ENCODE measurements at regions of chr1 and their contacts with region 1.

Region 1: GRCh38 chr1:229661022-229661877 is 35.2 kb downstream of the URB2 start:
- DNase-seq: peak; percentile 92
- H3K4me3 ChIP-seq: no peak overlapping the region
- H3K27ac ChIP-seq: no peak overlapping the region
- H3K4me1 ChIP-seq: peaks cover 9% of the 10 kb centered on the region
- H3K27me3 ChIP-seq: no peaks in the 10 kb centered on the region
- CTCF ChIP-seq: peak; percentile 81 to 87 (median 86)
- POLR2A ChIP-seq: no peak

Region 2: DNA sequence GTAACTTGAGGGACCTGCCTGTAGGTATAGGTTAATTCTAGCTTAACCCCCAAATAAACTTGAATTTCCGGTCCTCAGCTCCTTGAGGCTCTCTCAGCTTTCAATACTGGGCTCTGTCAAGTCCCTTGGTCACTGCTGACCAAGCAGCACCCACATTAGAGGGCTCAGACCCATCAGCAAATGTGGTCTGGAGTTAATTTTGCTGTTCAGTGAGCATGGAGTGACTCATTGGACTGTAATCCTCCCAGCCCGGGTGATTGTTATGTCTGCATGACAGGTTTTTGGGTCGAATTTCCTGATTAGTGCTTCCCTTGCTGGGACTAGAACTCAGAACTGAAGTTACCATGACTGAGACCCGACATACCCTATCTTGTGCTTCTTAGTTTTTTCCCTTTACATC is 95.4 kb after region 1 on chr1:
- intact Hi-C with region 1: no loop called
- DNase-seq: no peak
- H3K4me3 ChIP-seq: no peak overlapping the region
- H3K27ac ChIP-seq: no peak overlapping the region
- H3K4me1 ChIP-seq: no peaks in the 10 kb centered on the region
- H3K27me3 ChIP-seq: no peaks in the 10 kb centered on the region
- CTCF ChIP-seq: no peak
- POLR2A ChIP-seq: no peak

Region 3: DNA sequence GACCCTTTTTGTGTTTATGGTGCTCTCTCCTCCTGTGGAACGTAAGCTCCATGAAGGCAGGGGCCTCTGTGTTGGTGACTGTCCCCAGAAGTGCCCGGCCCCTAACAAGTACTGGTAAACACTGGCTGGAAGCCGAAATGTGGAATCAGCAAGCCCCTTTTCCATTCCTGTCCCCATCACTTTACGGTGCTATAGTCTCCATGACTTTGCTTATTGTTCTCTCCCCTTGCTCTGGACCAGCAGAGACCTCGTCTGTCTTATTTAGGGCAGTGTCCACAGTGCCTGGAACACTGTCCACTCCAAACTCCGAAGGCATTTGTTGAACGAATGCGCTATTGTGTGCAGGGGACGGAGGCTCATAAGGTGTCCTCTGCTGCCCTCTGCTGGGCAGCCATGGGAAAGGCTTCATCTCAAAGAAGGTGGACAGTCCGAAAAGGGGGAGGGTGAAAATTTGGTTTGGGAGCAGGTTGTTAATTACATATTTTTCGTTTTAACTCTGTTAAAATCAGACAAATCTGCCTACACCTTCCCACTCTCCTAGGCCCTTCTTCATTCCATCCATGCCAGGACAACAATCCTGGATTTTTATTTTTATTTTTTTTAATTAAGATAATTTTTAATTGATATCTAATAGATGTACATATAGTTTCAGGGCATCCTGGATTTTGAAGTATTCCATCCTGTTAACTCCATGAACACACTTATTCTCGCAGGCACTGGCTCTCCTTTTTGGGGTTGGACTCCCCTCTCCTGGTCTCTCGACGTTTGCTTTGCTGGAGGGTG is 649.3 kb after region 1 on chr1:
- intact Hi-C with region 1: loop called (anchors 5 kb)
- DNase-seq: peak; percentile 90
- H3K4me3 ChIP-seq: no peak overlapping the region
- H3K27ac ChIP-seq: no peak overlapping the region
- H3K4me1 ChIP-seq: peaks cover 4% of the 10 kb centered on the region
- H3K27me3 ChIP-seq: no peaks in the 10 kb centered on the region
- CTCF ChIP-seq: peak; percentile 82 to 90 (median 89)
- POLR2A ChIP-seq: no peak

Measured in testis (tissue), 5 donors.